Left ventricle myocardium inferior (tissue), 1 donor: ENCODE measurements at regions of chr16 and their contacts with region 1.

Region 1: GRCh38 chr16:70348991-70349390 is 2.3 kb downstream of the DDX19A start:
- DNase-seq: no peak
- H3K4me3 ChIP-seq: no peak overlapping the region
- H3K27ac ChIP-seq: no peak overlapping the region
- H3K4me1 ChIP-seq: peaks cover 43% of the 10 kb centered on the region
- H3K27me3 ChIP-seq: no peaks in the 10 kb centered on the region
- CTCF ChIP-seq: no peak

Region 2: DNA sequence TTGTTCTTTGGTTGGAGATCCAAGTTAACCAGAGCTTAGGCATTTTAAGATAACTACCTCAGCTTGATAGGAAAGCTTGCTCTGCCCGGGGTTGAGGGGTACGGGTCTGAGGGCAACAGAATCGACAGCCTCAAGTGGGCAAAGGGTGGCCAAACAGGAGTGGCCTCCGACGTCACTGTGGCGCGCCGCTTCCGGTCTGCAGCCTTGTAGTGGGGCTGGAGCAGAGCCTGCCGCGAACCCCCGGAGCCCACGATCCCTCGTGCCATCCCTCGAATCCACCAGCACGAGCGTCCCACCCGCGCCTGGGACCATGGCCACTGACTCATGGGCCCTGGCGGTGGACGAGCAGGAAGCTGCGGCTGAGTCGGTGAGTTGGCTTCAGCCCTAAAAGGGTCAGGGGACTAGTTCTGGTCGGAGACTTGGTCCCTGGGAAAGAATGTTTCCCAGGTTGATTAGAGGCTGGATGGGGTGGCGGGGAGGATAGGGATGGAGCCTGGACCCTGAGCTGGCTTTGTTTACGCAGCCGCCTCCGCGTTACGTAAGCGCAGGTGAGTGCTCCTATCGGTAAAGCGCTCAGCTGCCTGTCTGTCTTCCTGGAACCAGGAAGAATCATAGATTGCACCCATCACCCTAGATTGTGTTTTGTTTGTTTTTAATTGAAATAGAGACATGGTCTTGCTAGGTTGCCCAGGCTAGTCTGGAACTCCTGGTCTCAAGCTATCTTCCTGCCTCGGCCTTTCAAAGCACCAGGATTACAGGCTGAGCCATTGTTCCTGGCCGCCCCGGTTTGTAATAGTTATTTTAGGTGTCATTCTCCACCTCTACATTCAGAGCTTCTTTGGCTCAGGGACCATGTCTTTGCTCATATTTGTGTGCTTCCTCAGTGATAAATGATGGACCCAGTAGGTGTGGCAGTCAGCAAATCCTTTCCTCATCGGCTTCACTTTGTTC is 49.7 kb before region 1 on chr16 and contains the start of gene DDX19B:
- intact Hi-C with region 1: loop called (anchors 5 kb)
- DNase-seq: peak; percentile 83
- H3K4me3 ChIP-seq: peak within 1 kb of the TSS; percentile 83
- H3K27ac ChIP-seq: peak within 1 kb of the TSS; percentile 91
- H3K4me1 ChIP-seq: peaks cover 23% of the 10 kb centered on the region
- H3K27me3 ChIP-seq: no peaks in the 10 kb centered on the region
- CTCF ChIP-seq: no peak
- total RNA-seq, gene DDX19B: 13.7 TPM